ENCODE measurements at regions of chr5 and their contacts with region 1.

Region 1: GRCh38 chr5:142316051-142316450 is 8.8 kb downstream of the SPRY4 start:
- DNase-seq: no peak

Region 2: GRCh38 chr5:141359790-141360426 is 956.1 kb before region 1 on chr5 and contains the start of gene PCDHGB2:
- intact Hi-C with region 1: no loop called
- DNase-seq: peak; percentile 49
- total RNA-seq, gene PCDHGB2: 16.2 TPM

Region 3: GRCh38 chr5:142253938-142254337 is 62.1 kb before region 1 on chr5:
- intact Hi-C with region 1: no loop called
- DNase-seq: no peak

Region 4: DNA sequence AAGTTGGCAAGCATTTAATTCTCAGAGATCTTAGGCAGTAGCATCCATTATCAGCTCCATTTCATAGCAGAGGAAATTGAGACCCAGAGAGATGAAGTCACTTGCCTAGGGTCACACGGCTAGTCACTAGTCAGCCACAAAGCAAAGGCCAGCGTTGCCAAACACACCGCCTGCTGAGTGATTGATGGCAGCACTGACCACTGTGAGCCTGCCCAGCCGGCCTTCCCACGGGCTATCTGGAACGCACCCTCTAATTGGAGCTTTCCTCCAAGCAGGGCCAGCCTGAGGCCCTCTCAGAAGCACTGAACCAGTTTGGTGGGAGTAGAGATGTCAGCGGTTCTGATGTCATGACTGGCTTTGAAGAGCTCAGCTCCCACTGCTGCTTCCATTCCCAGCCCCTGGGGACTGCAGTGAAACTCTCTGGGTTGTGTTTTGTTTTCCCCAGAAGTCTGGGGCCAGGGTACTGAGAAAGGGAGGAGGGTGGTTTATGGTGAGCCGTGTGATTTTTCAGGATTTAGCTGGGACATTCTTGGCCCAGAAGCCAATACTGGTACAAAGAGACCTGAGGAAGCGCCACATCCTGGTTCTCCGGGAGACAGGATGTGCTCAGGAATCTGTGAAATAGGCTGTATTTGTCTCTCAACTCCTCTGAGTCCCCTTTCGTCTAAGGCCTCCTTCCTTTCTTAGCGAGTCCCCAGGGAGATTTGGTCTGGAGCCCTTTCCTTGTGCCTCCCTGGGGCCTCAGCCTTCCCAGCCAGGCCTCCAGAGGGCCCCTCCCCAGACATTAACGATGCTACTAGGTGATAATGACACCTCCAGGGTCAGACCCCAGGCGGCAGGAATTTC is 35.8 kb before region 1 on chr5:
- intact Hi-C with region 1: loop called (anchors 5 kb)
- DNase-seq: peak; percentile 84

Region 5: GRCh38 chr5:142296914-142297417 is 19.1 kb before region 1 on chr5:
- intact Hi-C with region 1: loop called (anchors 2 kb)
- DNase-seq: no peak